ENCODE measurements at regions of chr3 and their contacts with region 1.

Region 1: DNA sequence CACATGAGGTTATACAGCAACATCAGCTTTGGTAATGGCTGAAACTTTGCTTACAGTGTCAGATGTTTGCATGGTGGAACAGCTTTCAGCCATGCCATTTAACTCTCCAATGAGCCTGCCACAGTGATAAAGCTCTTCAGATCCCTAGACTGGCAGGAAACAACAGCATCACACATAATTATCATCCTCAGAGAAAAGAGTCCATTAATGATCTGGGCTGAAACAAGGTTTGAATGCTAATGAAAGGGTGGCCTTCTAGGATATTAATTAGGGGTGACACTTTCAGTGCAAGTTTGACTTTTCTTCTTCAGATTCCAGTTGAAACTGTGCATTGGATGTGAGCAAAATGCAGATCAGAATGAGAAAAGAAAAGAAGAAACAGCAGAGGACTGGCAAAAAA is 166.6 kb downstream of the IGSF11 start:
- DNase-seq: no peak
- H3K4me3 ChIP-seq: no peak overlapping the region
- H3K27ac ChIP-seq: no peak overlapping the region
- H3K4me1 ChIP-seq: no peaks in the 10 kb centered on the region
- H3K27me3 ChIP-seq: no peaks in the 10 kb centered on the region
- CTCF ChIP-seq: no peak

Region 2: DNA sequence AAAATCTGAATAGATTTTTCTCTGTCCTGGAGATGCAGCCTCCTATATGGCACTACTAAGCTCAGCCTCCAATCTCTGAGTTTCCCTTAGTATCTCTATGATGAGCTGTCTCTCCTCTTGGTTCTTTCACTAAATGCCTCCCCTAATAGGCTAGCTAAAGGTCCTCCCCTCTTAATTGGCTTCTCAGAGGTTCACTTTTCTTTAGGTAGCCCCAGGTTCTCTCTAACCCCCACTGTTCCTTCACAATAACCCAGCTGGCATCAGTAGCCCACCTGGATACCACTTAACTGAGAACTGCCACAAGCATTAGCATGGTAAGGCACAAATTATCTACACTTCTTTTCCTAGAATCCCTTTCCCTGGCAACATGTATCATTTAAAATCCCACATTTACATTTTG is 356.6 kb before region 1 on chr3:
- CTCF ChIA-PET with region 1: no interaction called
- POLR2A ChIA-PET with region 1: no interaction called
- intact Hi-C with region 1: no loop called
- DNase-seq: no peak
- H3K4me3 ChIP-seq: no peak overlapping the region
- H3K27ac ChIP-seq: no peak overlapping the region
- H3K4me1 ChIP-seq: no peaks in the 10 kb centered on the region
- H3K27me3 ChIP-seq: no peaks in the 10 kb centered on the region
- CTCF ChIP-seq: no peak

Region 3: GRCh38 chr3:119380697-119381096 is 512.6 kb after region 1 on chr3:
- CTCF ChIA-PET with region 1: no interaction called
- POLR2A ChIA-PET with region 1: interaction called, 4 read pairs
- intact Hi-C with region 1: loop called (anchors 2 kb)
- DNase-seq: no peak
- H3K4me3 ChIP-seq: no peak overlapping the region
- H3K27ac ChIP-seq: no peak overlapping the region
- H3K4me1 ChIP-seq: no peaks in the 10 kb centered on the region
- H3K27me3 ChIP-seq: no peaks in the 10 kb centered on the region
- CTCF ChIP-seq: no peak